ENCODE measurements at regions of chr5 and their contacts with region 1.

Region 1: DNA sequence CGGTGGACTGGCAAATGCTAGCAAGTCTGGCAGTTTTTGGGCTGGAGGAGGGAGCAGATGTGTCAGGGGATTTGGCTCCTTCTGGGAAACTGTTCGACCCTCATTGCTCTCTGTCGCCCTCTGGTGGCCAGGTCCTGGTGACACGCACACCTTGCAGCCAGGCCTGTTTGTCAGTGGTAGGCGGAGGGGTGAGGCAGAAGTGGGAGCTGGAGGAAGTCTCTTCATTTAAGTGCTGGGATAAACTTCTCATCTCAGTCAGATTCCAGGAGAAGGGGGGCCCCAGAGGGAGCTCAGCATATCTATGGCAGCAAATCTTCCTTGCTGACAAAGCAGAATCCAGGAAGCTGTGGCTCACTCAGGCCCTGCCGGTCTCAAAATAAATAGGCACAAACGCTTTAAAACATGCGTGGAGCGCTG is 326.5 kb downstream of the ZSWIM6 start:
- DNase-seq: peak; percentile 52 to 83 (median 65)
- H3K4me3 ChIP-seq: no peak overlapping the region
- H3K4me3 Mint-ChIP-seq: no peak overlapping the region
- H3K27ac ChIP-seq: no peak overlapping the region
- H3K27ac Mint-ChIP-seq: peak overlapping the region in 1 of 8 donors; percentile 51
- H3K4me1 ChIP-seq: no peaks in the 10 kb centered on the region
- H3K4me1 Mint-ChIP-seq: no peaks in the 10 kb centered on the region
- H3K27me3 ChIP-seq: no peaks in the 10 kb centered on the region
- H3K27me3 Mint-ChIP-seq: peaks cover 6 to 31% of the 10 kb centered on the region in 2 donors

Region 2: DNA sequence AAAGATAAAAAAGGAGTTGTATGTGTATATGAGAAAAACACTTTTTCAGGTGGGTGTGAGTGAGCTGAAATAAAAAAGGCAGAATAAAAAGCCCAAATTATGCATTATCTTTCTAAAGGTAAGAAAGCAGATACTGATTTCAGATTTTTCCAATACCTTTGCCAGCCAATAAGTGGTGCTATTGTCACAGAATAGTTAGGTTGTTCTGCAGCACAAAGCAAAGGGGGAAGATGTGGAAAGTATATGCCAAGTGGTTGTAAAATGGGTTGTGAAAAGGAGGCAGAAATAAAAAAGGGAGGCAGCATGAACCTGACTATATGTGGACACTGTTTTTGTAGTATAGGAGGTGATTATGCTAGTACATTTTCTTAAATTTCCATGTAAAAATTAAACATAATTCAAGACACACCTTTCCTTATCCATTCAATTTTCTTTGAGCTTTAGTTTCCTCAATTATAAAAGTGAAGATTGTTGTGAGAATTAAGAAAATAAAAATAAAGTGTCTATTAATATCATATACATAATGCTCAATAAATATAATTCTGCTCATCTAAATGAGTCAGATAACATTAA is 603.1 kb before region 1 on chr5:
- CTCF ChIA-PET with region 1: interaction called, 29 read pairs
- POLR2A ChIA-PET with region 1: no interaction called
- DNase-seq: peak in 2 of 5 donors; percentile 4 to 21
- H3K4me3 ChIP-seq: no peak overlapping the region
- H3K4me3 Mint-ChIP-seq: no peak overlapping the region
- H3K27ac ChIP-seq: no peak overlapping the region
- H3K27ac Mint-ChIP-seq: no peak overlapping the region
- H3K4me1 ChIP-seq: no peaks in the 10 kb centered on the region
- H3K4me1 Mint-ChIP-seq: no peaks in the 10 kb centered on the region
- H3K27me3 ChIP-seq: no peaks in the 10 kb centered on the region
- H3K27me3 Mint-ChIP-seq: no peaks in the 10 kb centered on the region

Region 3: GRCh38 chr5:61677220-61677619 is 18.6 kb after region 1 on chr5:
- CTCF ChIA-PET with region 1: no interaction called
- POLR2A ChIA-PET with region 1: no interaction called
- DNase-seq: no peak
- H3K4me3 ChIP-seq: no peak overlapping the region
- H3K4me3 Mint-ChIP-seq: no peak overlapping the region
- H3K27ac ChIP-seq: no peak overlapping the region
- H3K27ac Mint-ChIP-seq: no peak overlapping the region
- H3K4me1 ChIP-seq: no peaks in the 10 kb centered on the region
- H3K4me1 Mint-ChIP-seq: no peaks in the 10 kb centered on the region
- H3K27me3 ChIP-seq: no peaks in the 10 kb centered on the region
- H3K27me3 Mint-ChIP-seq: peaks cover 16 to 48% of the 10 kb centered on the region in 2 donors